ENCODE measurements at regions of chr7 and their contacts with region 1.

Region 1: GRCh38 chr7:80643336-80643915 is 5.0 kb downstream of the CD36 start:
- DNase-seq: no peak
- H3K4me3 ChIP-seq: no peak overlapping the region
- H3K27me3 ChIP-seq: no peaks in the 10 kb centered on the region
- CTCF ChIP-seq: no peak

Region 2: DNA sequence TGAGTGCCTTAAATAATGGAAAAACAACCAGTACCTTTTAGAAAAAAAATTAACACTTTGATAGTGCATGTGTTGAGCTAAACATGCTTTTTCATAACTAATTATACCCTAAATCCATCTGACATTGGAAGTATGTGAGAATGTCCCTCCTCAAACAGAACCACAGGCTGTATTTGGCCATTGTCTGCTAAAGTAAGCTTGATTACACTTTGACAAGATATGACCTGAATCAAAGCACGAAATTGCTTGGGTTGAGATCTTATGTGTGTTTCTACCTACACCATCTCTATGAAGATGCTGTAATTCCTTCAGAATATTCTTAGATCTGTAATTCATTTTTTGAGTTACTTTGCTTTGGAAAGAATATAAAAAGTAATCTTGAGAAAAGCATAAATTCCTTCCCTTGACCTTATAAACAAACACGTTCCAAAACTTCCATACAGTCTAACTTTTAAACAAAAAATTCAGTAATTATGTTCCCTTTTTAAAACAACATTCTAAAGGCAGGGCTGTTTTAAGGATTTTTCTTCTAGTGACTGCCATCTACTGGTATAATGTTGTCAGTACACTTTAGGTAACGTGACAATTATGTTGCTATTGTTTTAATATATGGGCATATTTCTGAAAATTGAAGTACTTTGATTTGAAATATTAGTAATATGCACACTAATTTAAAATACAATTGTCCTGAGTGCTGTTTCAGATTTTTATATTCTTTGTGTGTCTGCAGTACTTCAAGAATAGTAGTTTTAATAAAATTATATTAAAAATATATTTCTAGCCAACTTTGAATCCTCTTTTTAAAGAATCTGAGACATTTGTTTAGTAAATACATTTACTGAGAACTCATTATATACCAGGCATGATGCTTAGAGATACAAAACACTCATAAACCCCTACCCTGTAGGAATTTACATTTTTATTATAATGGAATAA is 16.0 kb after region 1 on chr7:
- CTCF ChIA-PET with region 1: interaction called, 10 read pairs
- POLR2A ChIA-PET with region 1: no interaction called
- DNase-seq: peak; percentile 19
- H3K4me3 ChIP-seq: no peak overlapping the region
- H3K27me3 ChIP-seq: no peaks in the 10 kb centered on the region
- CTCF ChIP-seq: peak; percentile 49